Prostate gland (tissue), 2 donors: ENCODE measurements at regions of chr19 and their contacts with region 1.

Region 1: DNA sequence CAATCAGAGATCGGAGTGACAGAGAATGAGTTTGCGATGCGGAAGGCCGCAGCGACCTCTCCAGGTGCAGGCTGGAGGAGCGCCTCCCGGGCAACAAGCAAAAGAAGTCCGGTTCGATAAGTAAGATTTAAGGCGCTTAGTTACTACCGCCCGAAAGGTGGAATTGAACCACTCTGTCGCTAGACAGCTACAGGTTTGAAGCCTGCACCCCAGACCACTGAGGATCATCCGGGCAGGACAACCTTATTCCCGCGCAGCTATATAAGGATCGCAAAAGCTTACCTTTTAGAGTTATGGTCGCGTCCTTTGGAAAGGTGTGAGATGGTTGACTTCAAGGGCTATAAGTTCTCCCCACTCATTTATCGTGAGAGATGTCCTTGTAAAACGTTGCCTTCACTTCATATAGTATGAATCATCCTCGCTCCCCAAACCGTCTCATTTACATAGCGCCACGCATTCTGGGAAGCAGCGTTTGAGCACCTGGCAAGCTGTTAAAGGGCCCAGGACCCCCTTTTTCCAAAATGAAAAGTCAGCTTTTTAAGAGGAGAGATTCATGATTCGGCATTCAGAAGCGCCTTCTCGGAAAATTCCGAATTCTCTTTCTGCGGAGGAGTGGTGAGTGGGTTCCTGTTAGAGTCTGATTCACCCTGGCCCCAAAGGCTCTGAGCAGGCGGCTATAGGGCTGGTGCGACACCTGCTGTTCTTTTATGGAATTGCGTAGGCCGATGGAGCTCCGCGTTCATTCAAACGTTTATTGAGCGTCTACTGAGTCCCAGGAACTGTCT is 10.8 kb downstream of the FOSB start:
- DNase-seq: peak; percentile 87
- H3K4me3 ChIP-seq: peak overlapping the region; percentile 40 to 44
- H3K27ac ChIP-seq: peak overlapping the region; percentile 94 to 95
- H3K4me1 ChIP-seq: no peaks in the 10 kb centered on the region
- H3K27me3 ChIP-seq: no peaks in the 10 kb centered on the region
- CTCF ChIP-seq: peak; percentile 92 to 99 (median 96)
- POLR2A ChIP-seq: no peak

Region 2: GRCh38 chr19:45439569-45440254 is 38.9 kb before region 1 on chr19:
- intact Hi-C with region 1: loop called (anchors 1 kb)
- DNase-seq: peak; percentile 71
- H3K4me3 ChIP-seq: peak overlapping the region; percentile 83 to 84
- H3K27ac ChIP-seq: peak overlapping the region; percentile 92 to 95
- H3K4me1 ChIP-seq: no peaks in the 10 kb centered on the region
- H3K27me3 ChIP-seq: no peaks in the 10 kb centered on the region
- CTCF ChIP-seq: peak; percentile 100
- POLR2A ChIP-seq: no peak

Region 3: GRCh38 chr19:45451131-45451849 is 27.4 kb before region 1 on chr19:
- intact Hi-C with region 1: no loop called
- DNase-seq: no peak
- H3K4me3 ChIP-seq: peak overlapping the region; percentile 49 to 54
- H3K27ac ChIP-seq: peak overlapping the region; percentile 92 to 96
- H3K4me1 ChIP-seq: peaks cover 10% of the 10 kb centered on the region
- H3K27me3 ChIP-seq: no peaks in the 10 kb centered on the region
- CTCF ChIP-seq: no peak
- POLR2A ChIP-seq: no peak

Region 4: GRCh38 chr19:45615795-45616708 is 137.4 kb after region 1 on chr19:
- intact Hi-C with region 1: no loop called
- DNase-seq: peak; percentile 69
- H3K4me3 ChIP-seq: no peak overlapping the region
- H3K27ac ChIP-seq: peak overlapping the region in 1 of 2 donors; percentile 66
- H3K4me1 ChIP-seq: peaks cover 6% of the 10 kb centered on the region
- H3K27me3 ChIP-seq: no peaks in the 10 kb centered on the region
- CTCF ChIP-seq: no peak
- POLR2A ChIP-seq: peak; percentile 32